ENCODE measurements at regions of chr13 and their contacts with region 1.

Region 1: DNA sequence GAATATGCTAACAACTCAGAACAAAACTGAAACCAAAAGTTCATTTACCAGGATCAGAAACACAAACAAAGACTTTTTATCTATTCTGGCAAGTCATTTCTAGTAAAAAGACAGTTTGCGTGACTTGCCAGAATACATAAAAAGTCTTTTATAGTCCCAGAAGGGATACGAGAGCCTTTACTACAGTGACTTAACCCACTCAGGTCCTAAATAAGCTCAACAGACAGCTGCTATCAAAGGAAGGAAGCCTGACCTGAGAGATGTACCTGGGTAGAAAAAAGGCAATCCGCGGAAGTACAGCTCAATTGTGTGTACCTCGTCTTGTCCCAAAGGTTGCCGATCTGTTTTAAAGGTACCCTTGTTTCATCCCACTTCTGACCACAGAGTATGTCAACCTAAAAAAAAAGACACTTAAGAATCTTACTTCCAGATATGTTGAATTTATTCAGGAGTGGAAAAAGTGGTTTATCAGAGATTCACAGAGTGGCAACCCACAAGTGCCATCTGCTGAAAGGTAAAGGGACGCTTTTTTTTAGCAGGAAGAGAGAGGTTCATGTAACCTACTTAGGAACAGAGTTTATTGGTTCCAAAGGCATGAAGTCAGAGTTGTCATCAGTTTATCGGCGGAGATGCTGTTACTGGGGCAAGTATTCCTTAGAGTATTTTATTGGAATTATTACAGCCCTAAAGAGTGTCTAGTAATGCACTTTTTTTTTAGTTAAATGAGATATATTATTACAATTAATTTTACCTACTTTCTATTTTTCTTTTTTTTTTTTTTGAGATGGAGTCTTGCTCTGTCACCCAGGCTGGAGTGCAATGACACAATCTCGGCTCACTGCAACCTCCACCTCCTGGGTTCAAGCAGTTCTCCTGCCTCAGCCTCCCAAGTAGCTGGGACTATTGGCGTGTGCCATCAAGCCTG is 69.7 kb upstream of the C1QTNF9B start:
- DNase-seq: peak; percentile 38
- H3K4me3 Mint-ChIP-seq: peak overlapping the region; percentile 29
- H3K27ac Mint-ChIP-seq: peak overlapping the region; percentile 72
- H3K4me1 Mint-ChIP-seq: peaks cover 29% of the 10 kb centered on the region
- H3K27me3 Mint-ChIP-seq: no peaks in the 10 kb centered on the region

Region 2: GRCh38 chr13:23510979-23511735 is 455.8 kb before region 1 on chr13:
- CTCF ChIA-PET with region 1: no interaction called
- intact Hi-C with region 1: no loop called
- DNase-seq: peak; percentile 12
- H3K4me3 Mint-ChIP-seq: no peak overlapping the region
- H3K27ac Mint-ChIP-seq: no peak overlapping the region
- H3K4me1 Mint-ChIP-seq: no peaks in the 10 kb centered on the region
- H3K27me3 Mint-ChIP-seq: peaks cover 31% of the 10 kb centered on the region

Region 3: DNA sequence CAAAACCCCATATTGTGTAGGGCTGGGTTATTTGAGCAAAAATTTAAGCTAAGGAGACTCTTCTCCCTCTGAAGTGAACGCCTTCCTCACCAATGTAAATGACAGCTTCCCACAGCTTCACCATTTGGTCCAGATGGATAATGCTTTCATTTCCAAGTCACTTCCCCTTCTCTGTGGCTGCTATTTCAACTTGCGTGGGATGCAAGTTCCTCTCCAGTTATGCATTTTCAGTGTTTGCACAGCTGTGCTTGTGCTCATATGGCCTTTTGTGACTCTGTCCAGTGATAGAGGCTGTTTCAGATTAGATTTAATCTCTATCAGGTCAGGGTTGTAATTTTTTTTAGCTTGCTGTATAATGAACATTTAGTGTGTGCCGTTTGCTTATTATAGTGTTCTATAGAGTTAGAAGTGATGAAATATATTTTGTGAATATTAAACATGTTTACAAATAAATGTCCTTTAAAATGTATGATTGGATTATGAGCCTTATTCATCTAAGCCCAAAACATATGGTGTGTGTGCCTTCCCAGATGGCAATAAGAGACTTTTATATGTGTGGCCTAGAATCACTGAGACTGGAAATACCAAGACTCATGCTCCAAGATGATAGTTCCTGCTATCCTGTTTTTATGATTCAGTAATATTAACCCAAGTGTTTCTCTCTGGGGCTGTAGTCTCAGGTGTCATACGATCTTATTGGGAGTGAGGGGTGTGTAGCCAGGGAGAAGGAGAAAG is 310.1 kb before region 1 on chr13:
- CTCF ChIA-PET with region 1: no interaction called
- intact Hi-C with region 1: no loop called
- DNase-seq: no peak
- H3K4me3 Mint-ChIP-seq: no peak overlapping the region
- H3K27ac Mint-ChIP-seq: no peak overlapping the region
- H3K4me1 Mint-ChIP-seq: no peaks in the 10 kb centered on the region
- H3K27me3 Mint-ChIP-seq: peaks cover 8% of the 10 kb centered on the region

Region 4: DNA sequence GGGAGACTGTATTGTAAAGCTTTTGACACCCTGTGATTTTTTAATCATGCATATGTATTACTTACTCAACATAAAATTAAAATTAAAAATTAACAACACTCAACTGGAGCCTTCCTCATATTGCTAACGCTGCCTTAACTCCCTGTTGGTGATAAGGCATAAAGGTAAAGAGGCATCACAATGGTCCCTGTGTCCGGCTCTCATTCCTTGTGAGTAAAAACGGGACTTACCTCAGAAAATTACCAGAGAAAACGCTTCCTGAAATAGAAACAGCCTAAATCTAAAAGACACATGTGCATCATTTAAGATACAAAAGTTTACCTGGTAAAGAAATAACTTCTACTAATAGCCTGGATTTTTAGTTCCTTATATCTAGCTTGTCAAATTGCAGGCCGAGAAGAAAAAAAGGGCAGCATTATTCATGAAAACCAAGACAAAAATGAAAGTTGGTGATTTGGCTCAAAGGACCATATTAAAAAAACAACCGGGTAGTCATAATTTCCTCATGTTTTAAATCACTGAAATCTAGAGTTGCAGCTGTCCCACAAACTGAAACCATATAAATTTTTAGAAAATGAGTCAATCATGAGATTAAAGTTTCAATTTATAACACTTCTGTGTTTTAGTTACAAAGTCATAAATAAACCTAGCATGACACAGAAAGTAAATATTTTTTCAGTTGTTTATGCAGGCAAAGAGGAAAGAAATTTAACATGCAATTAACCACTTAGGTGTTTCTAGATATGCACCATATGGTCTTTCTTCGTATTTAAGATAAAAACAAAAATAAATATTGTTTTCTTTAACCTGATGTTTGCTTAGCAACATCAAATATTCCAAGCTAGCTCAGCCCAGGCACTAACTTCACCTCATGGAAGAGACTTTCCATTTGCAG is 172.4 kb before region 1 on chr13:
- CTCF ChIA-PET with region 1: no interaction called
- intact Hi-C with region 1: loop called (anchors 5 kb)
- DNase-seq: no peak
- H3K4me3 Mint-ChIP-seq: no peak overlapping the region
- H3K27ac Mint-ChIP-seq: no peak overlapping the region
- H3K4me1 Mint-ChIP-seq: peaks cover 10% of the 10 kb centered on the region
- H3K27me3 Mint-ChIP-seq: no peaks in the 10 kb centered on the region

Region 5: GRCh38 chr13:23921451-23921888 is 45.5 kb before region 1 on chr13:
- CTCF ChIA-PET with region 1: interaction called, 8 read pairs
- intact Hi-C with region 1: loop called (anchors 1 kb)
- DNase-seq: peak; percentile 16
- H3K4me3 Mint-ChIP-seq: no peak overlapping the region
- H3K27ac Mint-ChIP-seq: no peak overlapping the region
- H3K4me1 Mint-ChIP-seq: no peaks in the 10 kb centered on the region
- H3K27me3 Mint-ChIP-seq: peaks cover 32% of the 10 kb centered on the region

Region 6: DNA sequence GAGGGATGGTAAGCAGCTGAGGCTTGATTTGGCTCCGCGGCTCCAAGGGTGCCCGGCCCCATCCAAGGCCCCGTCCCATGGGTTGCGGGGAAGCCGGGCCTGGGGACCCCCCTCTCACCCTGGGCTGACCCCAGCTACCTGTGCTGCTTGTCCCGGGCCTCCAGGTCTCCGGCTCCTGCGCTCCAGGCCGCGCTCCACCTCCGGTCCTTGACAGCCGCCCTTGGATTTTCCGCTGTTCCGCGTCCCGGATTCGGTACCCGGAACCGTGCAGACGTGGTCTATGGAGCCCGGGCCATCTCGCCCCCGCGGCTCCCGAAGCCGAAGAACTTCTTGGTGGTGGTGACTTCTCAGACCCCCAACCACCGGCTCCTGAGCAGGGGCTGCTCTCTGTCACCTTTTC is 21.3 kb before region 1 on chr13:
- CTCF ChIA-PET with region 1: no interaction called
- intact Hi-C with region 1: no loop called
- DNase-seq: no peak
- H3K4me3 Mint-ChIP-seq: no peak overlapping the region
- H3K27ac Mint-ChIP-seq: no peak overlapping the region
- H3K4me1 Mint-ChIP-seq: peaks cover 2% of the 10 kb centered on the region
- H3K27me3 Mint-ChIP-seq: peaks cover 20% of the 10 kb centered on the region

Region 7: GRCh38 chr13:24160454-24161009 is 193.6 kb after region 1 on chr13 and contains the start of gene SPATA13:
- CTCF ChIA-PET with region 1: no interaction called
- intact Hi-C with region 1: loop called (anchors 2 kb)
- DNase-seq: peak; percentile 95
- H3K4me3 Mint-ChIP-seq: peak within 1 kb of the TSS; percentile 86
- H3K27ac Mint-ChIP-seq: no peak within 1 kb of the TSS
- H3K4me1 Mint-ChIP-seq: peaks cover 12% of the 10 kb centered on the region
- H3K27me3 Mint-ChIP-seq: peaks cover 8% of the 10 kb centered on the region
- total RNA-seq, gene SPATA13: 56.8 to 57.4 TPM

Region 8: GRCh38 chr13:24270639-24271141 is 303.7 kb after region 1 on chr13:
- CTCF ChIA-PET with region 1: no interaction called
- intact Hi-C with region 1: loop called (anchors 1 kb)
- DNase-seq: peak; percentile 78
- H3K4me3 Mint-ChIP-seq: peak overlapping the region; percentile 91
- H3K27ac Mint-ChIP-seq: peak overlapping the region; percentile 98
- H3K4me1 Mint-ChIP-seq: peaks cover 75% of the 10 kb centered on the region
- H3K27me3 Mint-ChIP-seq: no peaks in the 10 kb centered on the region